Gastrocnemius medialis (tissue), 4 donors: ENCODE measurements at regions of chr2 and their contacts with region 1.

Region 1: GRCh38 chr2:160109936-160110673 is 47.7 kb upstream of the PLA2R1 start:
- DNase-seq: peak; percentile 28 to 62
- ATAC-seq: peak; percentile 88 to 97
- H3K4me3 ChIP-seq: no peak overlapping the region
- H3K27ac ChIP-seq: peak overlapping the region in 2 of 4 donors; percentile 6 to 44
- H3K4me1 ChIP-seq: no peaks in the 10 kb centered on the region
- H3K27me3 ChIP-seq: no peaks in the 10 kb centered on the region
- CTCF ChIP-seq: peak; percentile 65 to 86 (median 75)
- POLR2A ChIP-seq: no peak

Region 2: DNA sequence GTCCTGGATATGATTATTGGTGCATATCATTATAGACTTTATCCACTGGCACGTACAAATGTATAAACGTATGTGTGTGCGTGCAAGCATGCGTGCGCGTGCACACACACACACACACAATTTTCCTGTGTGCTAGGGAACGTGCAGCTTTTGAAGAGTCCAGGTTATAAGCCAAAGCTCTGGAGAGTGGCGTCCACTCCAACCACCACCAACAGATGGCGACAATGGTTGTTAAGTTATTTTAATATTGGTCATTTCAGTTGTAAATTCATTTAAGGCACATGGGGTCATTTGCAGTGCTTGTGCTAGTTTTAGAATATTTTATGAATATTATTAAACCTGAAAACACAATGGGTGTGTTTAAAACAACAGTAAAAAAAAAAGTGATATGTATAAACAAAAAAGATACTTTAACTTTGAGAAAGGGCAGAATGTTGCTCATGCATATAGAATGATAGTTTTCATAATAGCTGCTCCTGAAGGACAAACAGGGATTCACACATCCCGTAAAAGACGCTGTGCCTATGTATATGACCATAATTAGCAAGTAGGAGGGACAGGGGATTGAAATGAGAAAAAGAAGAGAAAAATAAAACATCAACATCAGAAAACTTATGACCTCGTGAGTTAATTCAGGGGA is 214.2 kb after region 1 on chr2:
- in situ Hi-C with region 1: no loop called
- intact Hi-C with region 1: loop called (anchors 10 kb)
- DNase-seq: peak in 1 of 2 donors; percentile 49
- ATAC-seq: peak; percentile 56 to 63
- H3K4me3 ChIP-seq: no peak overlapping the region
- H3K27ac ChIP-seq: no peak overlapping the region
- H3K4me1 ChIP-seq: peaks cover 47 to 50% of the 10 kb centered on the region in 2 donors
- H3K27me3 ChIP-seq: no peaks in the 10 kb centered on the region
- CTCF ChIP-seq: peak; percentile 54 to 81 (median 76)
- POLR2A ChIP-seq: no peak

Region 3: DNA sequence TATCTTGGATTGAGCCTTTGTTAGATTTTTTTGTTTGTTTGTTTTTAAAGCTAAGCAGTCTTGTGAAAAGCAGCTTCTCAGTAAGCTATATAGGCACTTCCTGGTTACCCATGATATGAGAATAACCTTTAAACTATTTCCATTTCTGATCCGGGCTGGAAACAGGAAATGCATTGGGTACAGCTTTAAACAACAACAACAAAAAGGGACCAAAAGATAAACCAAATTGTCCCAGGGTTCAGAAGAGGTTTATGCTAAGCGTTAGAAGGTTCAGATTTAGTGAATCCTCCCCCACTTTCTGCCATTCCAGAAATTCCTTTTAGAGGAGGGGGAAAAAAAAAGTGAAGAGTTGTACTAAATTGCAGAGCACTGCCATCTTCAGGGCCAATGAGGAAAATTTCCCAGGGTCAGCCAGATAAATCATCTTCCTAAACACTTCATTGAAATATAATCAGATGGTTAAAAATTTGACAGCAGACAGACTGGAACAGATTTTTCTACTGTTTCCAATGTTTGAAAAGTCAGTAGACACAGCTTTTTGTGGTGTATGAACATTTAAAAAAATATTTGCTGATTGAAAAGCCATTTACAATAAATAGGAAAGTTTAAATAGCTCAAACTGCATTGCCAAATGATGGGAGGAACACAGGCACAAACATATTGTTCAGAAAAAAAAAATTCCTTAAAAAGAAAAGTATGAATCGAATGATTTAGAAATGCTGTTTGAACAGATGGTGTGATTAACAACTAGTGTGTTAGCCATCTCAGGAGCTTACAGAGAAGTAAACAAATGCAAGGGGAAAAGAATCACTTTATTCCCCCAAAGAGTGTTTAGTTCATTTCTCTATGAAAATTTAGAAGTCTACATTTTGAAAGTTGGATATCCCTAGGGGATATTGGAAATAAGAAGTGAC is 860.2 kb after region 1 on chr2:
- in situ Hi-C with region 1: loop called in 3 of 4 experiments (anchors 25 kb)
- intact Hi-C with region 1: no loop called
- DNase-seq: peak in 1 of 2 donors; percentile 6
- ATAC-seq: peak; percentile 54 to 72
- H3K4me3 ChIP-seq: peak overlapping the region in 3 of 4 donors; percentile 10 to 14 (median 13)
- H3K27ac ChIP-seq: peak overlapping the region in 2 of 4 donors; percentile 16
- H3K4me1 ChIP-seq: no peaks in the 10 kb centered on the region
- H3K27me3 ChIP-seq: no peaks in the 10 kb centered on the region
- CTCF ChIP-seq: peak; percentile 15 to 72 (median 48)
- POLR2A ChIP-seq: no peak

Region 4: DNA sequence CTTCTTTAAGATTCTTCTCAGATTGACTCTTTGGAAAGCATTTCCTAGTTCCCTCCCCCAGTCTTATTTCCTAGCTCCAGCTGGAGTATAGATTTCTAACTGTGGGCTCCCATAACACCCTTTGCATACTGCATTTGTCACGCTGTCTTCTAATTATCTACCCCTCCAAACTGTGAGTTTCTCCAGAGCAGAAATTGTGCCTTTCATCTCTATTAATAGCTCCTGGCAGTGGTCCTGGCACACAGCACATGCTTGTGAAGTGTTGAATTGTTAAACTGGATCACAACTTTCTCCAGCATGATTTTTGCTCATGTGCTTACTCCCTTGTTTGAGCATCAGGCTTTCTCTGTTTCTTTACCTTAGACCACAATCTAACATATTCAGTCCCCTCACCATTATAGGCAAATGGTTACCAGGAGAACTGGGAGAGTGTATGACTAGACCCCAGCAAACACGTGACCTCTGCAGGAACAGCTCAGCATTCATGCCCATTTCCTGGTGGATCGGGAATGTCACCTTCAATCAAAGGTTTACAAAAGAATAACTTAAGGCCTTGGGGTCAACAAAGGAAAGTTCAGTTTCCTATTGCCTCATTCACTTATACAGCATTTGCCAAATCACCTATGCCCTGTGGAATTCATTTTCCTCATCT is 874.4 kb after region 1 on chr2:
- in situ Hi-C with region 1: loop called in 3 of 4 experiments (anchors 10 to 25 kb)
- intact Hi-C with region 1: no loop called
- DNase-seq: peak; percentile 30 to 44
- ATAC-seq: peak; percentile 84 to 95
- H3K4me3 ChIP-seq: no peak overlapping the region
- H3K27ac ChIP-seq: peak overlapping the region in 2 of 4 donors; percentile 25 to 39
- H3K4me1 ChIP-seq: peaks cover 9 to 10% of the 10 kb centered on the region in 2 donors
- H3K27me3 ChIP-seq: no peaks in the 10 kb centered on the region
- CTCF ChIP-seq: no peak
- POLR2A ChIP-seq: no peak